ENCODE measurements at regions of chr3 and their contacts with region 1.

Region 1: DNA sequence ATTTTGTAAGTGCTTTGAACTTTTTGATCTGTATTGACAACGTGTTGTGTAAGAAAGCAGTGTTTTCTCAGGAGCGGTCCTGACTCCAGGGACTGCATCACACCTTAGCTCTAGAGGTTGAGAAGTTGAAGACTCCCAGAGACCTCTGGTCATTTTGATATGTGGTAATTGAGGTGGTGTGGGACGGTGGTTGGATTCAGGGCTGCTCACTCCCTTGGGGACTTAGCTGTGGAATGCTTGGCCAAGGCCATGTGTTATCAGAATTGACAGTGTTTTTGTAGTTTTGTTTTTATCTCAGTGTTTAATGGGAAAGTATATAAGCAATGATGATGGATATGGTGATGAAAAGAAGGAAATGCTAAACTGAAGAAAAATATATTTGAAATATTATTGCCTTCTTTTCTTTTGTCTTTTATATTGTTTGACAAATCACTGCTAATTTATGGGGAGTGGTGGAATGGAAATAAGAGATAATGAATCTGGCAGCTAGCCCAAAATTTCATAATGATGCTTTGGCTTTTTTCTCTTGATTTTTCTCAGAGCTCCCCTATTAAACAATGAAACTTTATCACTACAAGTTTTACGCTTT is 16.0 kb downstream of the CMSS1 start:
- DNase-seq: no peak
- ATAC-seq: no peak
- H3K4me3 ChIP-seq: no peak overlapping the region
- H3K4me3 Mint-ChIP-seq: no peak overlapping the region
- H3K27ac ChIP-seq: no peak overlapping the region
- H3K27ac Mint-ChIP-seq: no peak overlapping the region
- H3K4me1 ChIP-seq: no peaks in the 10 kb centered on the region
- H3K4me1 Mint-ChIP-seq: peaks cover 2% of the 10 kb centered on the region
- H3K27me3 ChIP-seq: no peaks in the 10 kb centered on the region
- H3K27me3 Mint-ChIP-seq: no peaks in the 10 kb centered on the region
- CTCF ChIP-seq: no peak

Region 2: DNA sequence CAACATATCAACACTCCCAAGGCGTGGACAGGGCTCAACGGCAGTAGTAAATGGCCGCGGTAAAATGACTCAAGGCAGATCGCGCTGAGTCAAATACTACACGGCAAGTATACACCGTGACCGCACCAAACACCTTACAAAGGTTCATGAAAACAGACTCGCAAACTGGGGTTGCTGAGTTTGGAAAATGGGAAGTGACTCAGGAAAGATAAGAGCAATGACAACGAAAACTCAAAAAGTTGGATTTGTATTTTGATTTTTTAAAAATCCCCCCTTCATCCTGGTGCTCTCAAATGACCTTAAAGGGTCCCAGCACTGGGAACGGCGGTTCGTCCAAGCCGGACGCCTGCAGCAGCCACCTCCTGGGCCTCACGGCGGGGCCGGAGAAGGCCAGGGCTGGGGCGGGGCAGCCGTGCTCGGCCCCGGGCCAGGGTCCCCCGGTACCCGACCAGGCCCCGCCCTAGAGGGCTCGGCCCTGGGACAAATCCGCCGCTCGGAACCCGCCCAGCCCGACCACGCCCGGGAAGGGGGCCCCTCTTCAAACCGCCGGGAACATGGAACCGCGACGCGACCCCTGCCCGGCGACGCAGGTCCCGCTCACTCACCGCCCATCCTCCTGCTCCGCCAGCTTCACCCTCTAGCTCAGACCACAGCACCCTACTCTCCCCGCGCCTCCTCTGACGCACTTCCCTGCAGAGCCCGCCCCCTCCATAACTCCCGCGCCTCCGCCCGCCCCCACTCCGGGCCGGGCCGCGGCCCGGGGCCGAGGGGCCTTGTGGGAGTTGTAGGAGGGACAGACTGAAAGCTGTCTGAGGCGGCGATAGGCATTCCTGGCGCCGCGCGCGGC is 1311.2 kb before region 1 on chr3 and contains the start of gene CLDND1:
- CTCF ChIA-PET with region 1: no interaction called
- POLR2A ChIA-PET with region 1: no interaction called
- intact Hi-C with region 1: no loop called
- DNase-seq: peak; percentile 90 to 97 (median 95)
- ATAC-seq: peak; percentile 96
- H3K4me3 ChIP-seq: peak within 1 kb of the TSS; percentile 66 to 71
- H3K4me3 Mint-ChIP-seq: peak within 1 kb of the TSS; percentile 95
- H3K27ac ChIP-seq: peak within 1 kb of the TSS; percentile 82 to 86
- H3K27ac Mint-ChIP-seq: peak within 1 kb of the TSS; percentile 97
- H3K4me1 ChIP-seq: peaks cover 25% of the 10 kb centered on the region
- H3K4me1 Mint-ChIP-seq: peaks cover 54% of the 10 kb centered on the region
- H3K27me3 ChIP-seq: no peaks in the 10 kb centered on the region
- H3K27me3 Mint-ChIP-seq: no peaks in the 10 kb centered on the region
- CTCF ChIP-seq: no peak
- total RNA-seq, gene CLDND1: 135 to 146 TPM

Region 3: GRCh38 chr3:99808151-99808794 is 25.4 kb before region 1 on chr3:
- CTCF ChIA-PET with region 1: interaction called, 12 read pairs
- POLR2A ChIA-PET with region 1: no interaction called
- intact Hi-C with region 1: no loop called
- DNase-seq: peak in 6 of 9 experiments; percentile 10 to 72 (median 44)
- ATAC-seq: peak; percentile 72
- H3K4me3 ChIP-seq: no peak overlapping the region
- H3K4me3 Mint-ChIP-seq: no peak overlapping the region
- H3K27ac ChIP-seq: no peak overlapping the region
- H3K27ac Mint-ChIP-seq: no peak overlapping the region
- H3K4me1 ChIP-seq: no peaks in the 10 kb centered on the region
- H3K4me1 Mint-ChIP-seq: peaks cover 3% of the 10 kb centered on the region
- H3K27me3 ChIP-seq: no peaks in the 10 kb centered on the region
- H3K27me3 Mint-ChIP-seq: no peaks in the 10 kb centered on the region
- CTCF ChIP-seq: peak; percentile 76

Region 4: DNA sequence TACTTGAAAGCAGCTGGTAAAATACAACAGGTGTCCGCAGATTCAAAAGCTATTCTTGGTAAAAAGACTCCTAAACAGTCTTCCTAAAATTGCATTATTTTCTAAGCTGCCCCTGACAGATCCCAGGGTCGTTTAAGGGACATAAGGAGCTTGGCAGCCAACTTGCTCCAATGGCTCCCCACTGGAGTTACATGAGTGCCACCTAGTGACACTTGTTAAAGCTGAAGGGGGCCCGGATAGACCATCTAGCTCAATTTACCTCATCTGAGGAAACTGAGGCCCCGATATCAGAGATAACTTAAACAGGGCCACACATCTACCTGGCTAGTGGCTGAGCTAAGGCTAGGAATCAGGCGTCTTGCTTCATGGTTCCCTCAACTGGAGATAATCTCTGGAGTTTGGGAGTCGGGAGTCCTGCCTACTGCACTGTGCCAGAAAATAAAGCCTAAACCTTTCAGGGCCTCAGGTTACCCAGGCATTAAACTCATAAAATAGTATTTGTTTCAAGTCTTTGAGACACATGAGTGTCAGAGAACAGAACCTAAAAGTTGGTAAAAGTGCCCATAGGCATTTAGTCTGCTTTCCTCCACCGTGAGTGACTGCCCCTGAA is 420.6 kb after region 1 on chr3:
- CTCF ChIA-PET with region 1: interaction called, 7 read pairs
- POLR2A ChIA-PET with region 1: no interaction called
- intact Hi-C with region 1: loop called (anchors 1 to 5 kb)
- DNase-seq: peak in 4 of 9 experiments; percentile 15 to 64 (median 36)
- ATAC-seq: peak; percentile 66
- H3K4me3 ChIP-seq: no peak overlapping the region
- H3K4me3 Mint-ChIP-seq: no peak overlapping the region
- H3K27ac ChIP-seq: no peak overlapping the region
- H3K27ac Mint-ChIP-seq: no peak overlapping the region
- H3K4me1 ChIP-seq: no peaks in the 10 kb centered on the region
- H3K4me1 Mint-ChIP-seq: peaks cover 5% of the 10 kb centered on the region
- H3K27me3 ChIP-seq: no peaks in the 10 kb centered on the region
- H3K27me3 Mint-ChIP-seq: no peaks in the 10 kb centered on the region
- CTCF ChIP-seq: peak; percentile 51

Region 5: GRCh38 chr3:100316641-100317069 is 482.9 kb after region 1 on chr3:
- CTCF ChIA-PET with region 1: no interaction called
- POLR2A ChIA-PET with region 1: no interaction called
- intact Hi-C with region 1: loop called in 1 of 2 experiments (anchors 5 kb)
- DNase-seq: peak in 6 of 9 experiments; percentile 13 to 76 (median 30)
- ATAC-seq: peak; percentile 84
- H3K4me3 ChIP-seq: no peak overlapping the region
- H3K4me3 Mint-ChIP-seq: peak overlapping the region; percentile 45
- H3K27ac ChIP-seq: no peak overlapping the region
- H3K27ac Mint-ChIP-seq: no peak overlapping the region
- H3K4me1 ChIP-seq: no peaks in the 10 kb centered on the region
- H3K4me1 Mint-ChIP-seq: peaks cover 6% of the 10 kb centered on the region
- H3K27me3 ChIP-seq: no peaks in the 10 kb centered on the region
- H3K27me3 Mint-ChIP-seq: no peaks in the 10 kb centered on the region
- CTCF ChIP-seq: peak; percentile 58

Region 6: DNA sequence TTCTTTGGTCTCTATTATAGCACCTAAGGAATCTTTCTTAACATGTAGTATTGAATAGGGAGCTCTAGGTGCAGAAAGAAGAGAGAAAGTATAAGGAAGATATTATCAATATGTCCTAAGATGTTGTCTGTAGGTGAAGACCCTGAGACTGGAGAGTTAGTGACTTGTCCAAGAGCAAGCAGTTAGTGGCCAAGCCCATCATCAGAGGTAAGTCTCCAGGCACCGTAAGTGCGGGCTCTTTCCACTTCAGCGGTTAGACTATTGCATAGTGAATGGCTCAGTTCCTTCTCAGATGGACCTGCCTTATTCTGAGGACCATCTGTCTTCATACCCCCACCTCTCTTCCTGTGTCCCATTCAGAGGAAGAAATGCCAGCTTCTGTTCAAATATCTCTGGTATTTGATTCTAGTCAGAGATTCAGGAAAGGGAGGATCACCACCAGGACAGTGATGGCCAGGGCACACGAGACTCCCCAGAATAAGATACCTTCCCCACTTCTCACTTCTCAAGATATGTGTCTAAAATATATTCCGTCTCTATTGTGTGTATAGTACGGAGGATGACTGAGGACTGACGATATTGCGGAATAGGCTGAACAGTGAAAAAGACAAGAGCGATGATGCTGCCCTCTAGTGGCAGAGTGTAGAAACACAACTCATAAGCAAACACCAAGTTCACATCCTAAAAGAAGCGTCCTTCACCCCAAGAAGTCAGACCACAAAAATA is 756.6 kb after region 1 on chr3:
- CTCF ChIA-PET with region 1: interaction called, 9 read pairs
- POLR2A ChIA-PET with region 1: no interaction called
- intact Hi-C with region 1: loop called (anchors 1 to 5 kb)
- DNase-seq: peak in 8 of 9 experiments; percentile 29 to 81 (median 60)
- ATAC-seq: peak; percentile 89
- H3K4me3 ChIP-seq: peak overlapping the region in 1 of 2 experiments; percentile 9
- H3K4me3 Mint-ChIP-seq: peak overlapping the region; percentile 7
- H3K27ac ChIP-seq: no peak overlapping the region
- H3K27ac Mint-ChIP-seq: no peak overlapping the region
- H3K4me1 ChIP-seq: peaks cover 3% of the 10 kb centered on the region
- H3K4me1 Mint-ChIP-seq: peaks cover 3% of the 10 kb centered on the region
- H3K27me3 ChIP-seq: no peaks in the 10 kb centered on the region
- H3K27me3 Mint-ChIP-seq: no peaks in the 10 kb centered on the region
- CTCF ChIP-seq: peak; percentile 81

Region 7: GRCh38 chr3:101532783-101533602 is 1699.3 kb after region 1 on chr3:
- CTCF ChIA-PET with region 1: no interaction called
- POLR2A ChIA-PET with region 1: no interaction called
- intact Hi-C with region 1: no loop called
- DNase-seq: no peak
- ATAC-seq: no peak
- H3K4me3 ChIP-seq: no peak overlapping the region
- H3K4me3 Mint-ChIP-seq: no peak overlapping the region
- H3K27ac ChIP-seq: no peak overlapping the region
- H3K27ac Mint-ChIP-seq: no peak overlapping the region
- H3K4me1 ChIP-seq: peaks cover 28% of the 10 kb centered on the region
- H3K4me1 Mint-ChIP-seq: peaks cover 35% of the 10 kb centered on the region
- H3K27me3 ChIP-seq: no peaks in the 10 kb centered on the region
- H3K27me3 Mint-ChIP-seq: no peaks in the 10 kb centered on the region
- CTCF ChIP-seq: no peak

Measured in CD8-positive, alpha-beta T cell (primary cell).